CD4-positive, alpha-beta memory T cell (primary cell): ENCODE measurements at regions of chr1 and their contacts with region 1.

Region 1: GRCh38 chr1:203625628-203626019 is 1.0 kb upstream of the ATP2B4 start:
- DNase-seq: peak; percentile 84 to 91 (median 85)
- H3K4me3 ChIP-seq: peak overlapping the region; percentile 82 to 100
- H3K4me3 Mint-ChIP-seq: peak overlapping the region; percentile 95 to 100 (median 98)
- H3K27ac ChIP-seq: peak overlapping the region; percentile 84
- H3K27ac Mint-ChIP-seq: peak overlapping the region; percentile 83 to 97 (median 96)
- H3K4me1 ChIP-seq: peaks cover 32% of the 10 kb centered on the region
- H3K4me1 Mint-ChIP-seq: peaks cover 18 to 56% (median 24%) of the 10 kb centered on the region in 4 donors
- H3K27me3 ChIP-seq: no peaks in the 10 kb centered on the region
- H3K27me3 Mint-ChIP-seq: no peaks in the 10 kb centered on the region

Region 2: GRCh38 chr1:202505356-202505755 is 1120.3 kb before region 1 on chr1:
- CTCF ChIA-PET with region 1: no interaction called
- POLR2A ChIA-PET with region 1: no interaction called
- intact Hi-C with region 1: no loop called
- DNase-seq: no peak
- H3K4me3 ChIP-seq: no peak overlapping the region
- H3K4me3 Mint-ChIP-seq: no peak overlapping the region
- H3K27ac ChIP-seq: no peak overlapping the region
- H3K27ac Mint-ChIP-seq: no peak overlapping the region
- H3K4me1 ChIP-seq: no peaks in the 10 kb centered on the region
- H3K4me1 Mint-ChIP-seq: no peaks in the 10 kb centered on the region
- H3K27me3 ChIP-seq: no peaks in the 10 kb centered on the region
- H3K27me3 Mint-ChIP-seq: no peaks in the 10 kb centered on the region

Region 3: DNA sequence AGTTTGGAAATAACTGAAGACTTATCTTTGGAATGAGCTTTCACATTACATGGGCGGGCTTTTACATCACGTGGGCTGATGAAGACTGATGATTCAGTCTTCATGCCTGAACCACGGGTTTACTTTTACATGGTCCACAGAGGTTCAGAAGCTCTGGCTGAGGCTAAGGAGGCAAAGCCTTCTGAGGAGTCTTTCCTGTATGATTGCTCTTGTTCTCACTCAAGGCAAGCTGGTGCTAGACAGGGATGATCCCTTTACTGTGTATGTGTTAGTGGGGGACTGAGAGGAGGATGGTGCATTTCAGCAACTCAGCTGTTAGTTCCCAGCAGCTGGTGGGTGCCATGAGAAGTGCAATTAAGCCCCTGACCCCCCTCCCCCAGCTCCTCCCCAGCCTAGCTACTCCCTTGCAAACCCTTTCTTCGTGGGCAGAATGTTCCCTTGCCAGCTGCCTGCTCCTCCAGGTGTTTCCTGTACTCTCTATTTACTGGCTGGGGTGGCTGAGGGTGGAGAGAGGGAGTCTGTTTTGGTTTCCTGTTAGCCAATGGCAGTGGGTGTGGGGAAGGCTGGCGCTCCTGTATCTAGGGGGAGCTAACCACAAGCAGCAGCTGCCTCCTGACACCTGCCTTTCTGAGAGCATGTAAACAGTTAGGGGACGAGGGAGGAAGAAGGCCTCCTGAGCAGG is 304.9 kb before region 1 on chr1:
- CTCF ChIA-PET with region 1: no interaction called
- POLR2A ChIA-PET with region 1: interaction called, 7 read pairs
- intact Hi-C with region 1: loop called (anchors 5 kb)
- DNase-seq: peak; percentile 83 to 90 (median 87)
- H3K4me3 ChIP-seq: peak overlapping the region in 1 of 2 donors; percentile 27
- H3K4me3 Mint-ChIP-seq: peak overlapping the region; percentile 61 to 93 (median 83)
- H3K27ac ChIP-seq: peak overlapping the region; percentile 70
- H3K27ac Mint-ChIP-seq: peak overlapping the region; percentile 91 to 99 (median 98)
- H3K4me1 ChIP-seq: peaks cover 94% of the 10 kb centered on the region
- H3K4me1 Mint-ChIP-seq: peaks cover 72 to 93% (median 84%) of the 10 kb centered on the region in 4 donors
- H3K27me3 ChIP-seq: no peaks in the 10 kb centered on the region
- H3K27me3 Mint-ChIP-seq: no peaks in the 10 kb centered on the region

Region 4: DNA sequence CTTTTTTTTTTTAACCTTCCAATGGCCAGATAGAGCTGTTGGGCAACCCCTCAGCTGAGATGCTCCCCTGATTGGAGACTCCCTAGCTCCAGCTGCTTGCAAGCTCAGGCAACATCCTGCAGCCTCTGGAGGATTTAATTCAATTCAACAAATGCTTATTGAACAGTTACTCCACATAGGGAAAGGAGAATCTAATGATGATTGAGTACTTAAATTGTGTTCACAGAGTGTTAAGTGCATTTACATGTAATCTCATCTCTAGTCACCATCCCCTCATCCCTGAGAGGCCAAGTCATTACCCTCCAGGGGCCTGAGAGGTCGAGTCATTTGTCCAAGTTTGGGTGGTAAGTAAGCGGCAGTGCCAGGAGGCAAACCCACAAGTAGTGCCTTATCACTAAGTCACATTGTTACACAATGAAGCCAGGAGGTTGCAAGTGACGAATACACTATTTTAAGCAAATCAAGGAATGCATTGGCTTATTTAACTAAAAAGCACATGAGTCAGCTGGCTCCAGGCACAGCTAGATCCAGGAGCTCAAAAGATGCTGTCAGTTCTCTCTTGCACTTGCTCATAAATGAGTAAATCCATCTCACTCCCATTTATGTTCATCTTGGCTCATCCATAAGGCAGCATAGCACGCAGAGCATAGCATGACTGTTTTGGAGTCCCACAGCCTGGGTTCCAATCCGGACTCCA is 67.4 kb before region 1 on chr1:
- CTCF ChIA-PET with region 1: no interaction called
- POLR2A ChIA-PET with region 1: no interaction called
- intact Hi-C with region 1: no loop called
- DNase-seq: no peak
- H3K4me3 ChIP-seq: no peak overlapping the region
- H3K4me3 Mint-ChIP-seq: no peak overlapping the region
- H3K27ac ChIP-seq: no peak overlapping the region
- H3K27ac Mint-ChIP-seq: no peak overlapping the region
- H3K4me1 ChIP-seq: no peaks in the 10 kb centered on the region
- H3K4me1 Mint-ChIP-seq: no peaks in the 10 kb centered on the region
- H3K27me3 ChIP-seq: no peaks in the 10 kb centered on the region
- H3K27me3 Mint-ChIP-seq: peaks cover 0 to 3% of the 10 kb centered on the region in 2 donors

Region 5: GRCh38 chr1:203612932-203613682 is 12.5 kb before region 1 on chr1:
- CTCF ChIA-PET with region 1: interaction called, 44 read pairs
- POLR2A ChIA-PET with region 1: interaction called, 120 read pairs
- intact Hi-C with region 1: no loop called
- DNase-seq: no peak
- H3K4me3 ChIP-seq: no peak overlapping the region
- H3K4me3 Mint-ChIP-seq: peak overlapping the region in 5 of 8 donors; percentile 21 to 57 (median 49)
- H3K27ac ChIP-seq: no peak overlapping the region
- H3K27ac Mint-ChIP-seq: peak overlapping the region in 6 of 7 donors; percentile 41 to 73 (median 56)
- H3K4me1 ChIP-seq: peaks cover 39% of the 10 kb centered on the region
- H3K4me1 Mint-ChIP-seq: peaks cover 29 to 53% (median 39%) of the 10 kb centered on the region in 4 donors
- H3K27me3 ChIP-seq: no peaks in the 10 kb centered on the region
- H3K27me3 Mint-ChIP-seq: no peaks in the 10 kb centered on the region

Region 6: DNA sequence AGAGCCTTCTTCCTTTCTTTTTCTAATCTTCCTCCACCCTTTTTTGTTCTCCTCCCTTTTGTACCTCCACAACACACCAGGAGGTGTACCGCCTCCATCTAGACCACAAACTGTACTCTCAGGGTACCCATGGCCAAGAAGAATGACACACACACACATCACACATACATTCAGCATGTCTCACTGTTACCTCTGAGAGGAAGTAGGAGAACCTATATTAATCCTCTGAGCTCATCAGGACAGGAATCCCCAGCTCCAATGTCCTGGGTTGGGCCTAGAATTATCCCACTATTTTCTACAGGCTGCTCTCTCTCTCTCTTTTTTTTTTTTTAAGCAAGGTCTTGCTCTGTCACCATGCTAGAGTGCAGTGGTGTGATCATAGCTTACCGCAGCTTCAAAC is 37.7 kb after region 1 on chr1:
- CTCF ChIA-PET with region 1: interaction called, 8 read pairs
- POLR2A ChIA-PET with region 1: interaction called, 12 read pairs
- intact Hi-C with region 1: no loop called
- DNase-seq: peak in 1 of 5 donors; percentile 52
- H3K4me3 ChIP-seq: no peak overlapping the region
- H3K4me3 Mint-ChIP-seq: peak overlapping the region in 7 of 8 donors; percentile 43 to 74 (median 69)
- H3K27ac ChIP-seq: peak overlapping the region; percentile 33
- H3K27ac Mint-ChIP-seq: peak overlapping the region; percentile 79 to 95 (median 85)
- H3K4me1 ChIP-seq: peaks cover 74% of the 10 kb centered on the region
- H3K4me1 Mint-ChIP-seq: peaks cover 56 to 79% (median 68%) of the 10 kb centered on the region in 4 donors
- H3K27me3 ChIP-seq: no peaks in the 10 kb centered on the region
- H3K27me3 Mint-ChIP-seq: no peaks in the 10 kb centered on the region

Region 7: GRCh38 chr1:203702130-203702577 is 76.5 kb after region 1 on chr1:
- CTCF ChIA-PET with region 1: interaction called, 173 read pairs
- POLR2A ChIA-PET with region 1: interaction called, 89 read pairs
- intact Hi-C with region 1: loop called (anchors 1 kb)
- DNase-seq: peak; percentile 46 to 68 (median 57)
- H3K4me3 ChIP-seq: no peak overlapping the region
- H3K4me3 Mint-ChIP-seq: no peak overlapping the region
- H3K27ac ChIP-seq: no peak overlapping the region
- H3K27ac Mint-ChIP-seq: peak overlapping the region; percentile 26 to 97 (median 89)
- H3K4me1 ChIP-seq: peaks cover 3% of the 10 kb centered on the region
- H3K4me1 Mint-ChIP-seq: peaks cover 5 to 15% (median 10%) of the 10 kb centered on the region in 4 donors
- H3K27me3 ChIP-seq: no peaks in the 10 kb centered on the region
- H3K27me3 Mint-ChIP-seq: no peaks in the 10 kb centered on the region

Region 8: GRCh38 chr1:204128964-204129896 is 503.6 kb after region 1 on chr1:
- CTCF ChIA-PET with region 1: interaction called, 12 read pairs
- POLR2A ChIA-PET with region 1: no interaction called
- intact Hi-C with region 1: no loop called
- DNase-seq: peak; percentile 55 to 65 (median 59)
- H3K4me3 ChIP-seq: no peak overlapping the region
- H3K4me3 Mint-ChIP-seq: peak overlapping the region in 2 of 8 donors; percentile 36 to 46
- H3K27ac ChIP-seq: no peak overlapping the region
- H3K27ac Mint-ChIP-seq: peak overlapping the region in 4 of 7 donors; percentile 27 to 75 (median 44)
- H3K4me1 ChIP-seq: peaks cover 9% of the 10 kb centered on the region
- H3K4me1 Mint-ChIP-seq: peaks cover 5 to 14% (median 10%) of the 10 kb centered on the region in 4 donors
- H3K27me3 ChIP-seq: no peaks in the 10 kb centered on the region
- H3K27me3 Mint-ChIP-seq: peaks cover 0 to 1% of the 10 kb centered on the region in 2 donors